PC-3 (cell line): ENCODE measurements at regions of chr2 and their contacts with region 1.

Region 1: GRCh38 chr2:138922973-138923563 is 142.9 kb upstream of the NXPH2 start:
- DNase-seq: peak; percentile 70
- ATAC-seq: peak; percentile 53
- H3K4me3 ChIP-seq: no peak overlapping the region
- H3K27ac ChIP-seq: no peak overlapping the region
- H3K4me1 ChIP-seq: peaks cover 11% of the 10 kb centered on the region; the same call in 1 of the 2 replicates
- H3K27me3 ChIP-seq: no peaks in the 10 kb centered on the region
- CTCF ChIP-seq: peak; percentile 84

Region 2: DNA sequence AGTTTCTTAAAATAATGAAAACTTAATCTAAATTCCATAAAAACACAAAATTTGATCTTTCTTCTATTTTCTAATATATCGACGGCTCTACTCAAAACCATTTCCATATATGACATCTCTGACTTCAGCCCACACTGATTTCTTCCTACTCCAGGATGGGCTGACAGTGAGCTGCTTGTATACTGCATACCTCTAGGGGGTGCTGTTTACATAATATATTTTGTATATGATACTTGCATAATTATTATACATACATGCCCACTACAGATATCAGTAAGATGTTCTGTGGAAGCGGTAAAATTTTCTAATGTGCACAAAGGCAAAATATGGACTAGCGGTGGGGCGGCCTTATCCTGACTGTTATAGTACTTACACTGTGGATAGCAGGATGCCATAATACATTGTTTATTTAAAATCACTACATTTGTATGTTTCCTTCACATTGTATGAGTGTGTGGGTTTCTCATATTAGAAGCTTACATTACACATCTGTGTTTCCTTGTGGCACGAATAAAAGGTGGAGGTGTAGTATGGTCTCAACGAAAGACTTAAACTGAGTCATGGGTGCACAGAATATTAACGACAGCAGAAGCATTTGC is 76.7 kb before region 1 on chr2:
- CTCF ChIA-PET with region 1: no interaction called
- POLR2A ChIA-PET with region 1: no interaction called
- intact Hi-C with region 1: loop called (anchors 2 kb)
- DNase-seq: peak; percentile 73
- ATAC-seq: peak; percentile 92
- H3K4me3 ChIP-seq: no peak overlapping the region
- H3K27ac ChIP-seq: no peak overlapping the region
- H3K4me1 ChIP-seq: no peaks in the 10 kb centered on the region
- H3K27me3 ChIP-seq: no peaks in the 10 kb centered on the region
- CTCF ChIP-seq: peak; percentile 93

Region 3: GRCh38 chr2:139031722-139032121 is 108.7 kb after region 1 on chr2:
- CTCF ChIA-PET with region 1: interaction called, 6 read pairs
- POLR2A ChIA-PET with region 1: no interaction called
- intact Hi-C with region 1: loop called (anchors 1 kb)
- DNase-seq: peak; percentile 78
- ATAC-seq: peak; percentile 86
- H3K4me3 ChIP-seq: no peak overlapping the region
- H3K27ac ChIP-seq: peak overlapping the region; percentile 52
- H3K4me1 ChIP-seq: peaks cover 26% of the 10 kb centered on the region
- H3K27me3 ChIP-seq: no peaks in the 10 kb centered on the region
- CTCF ChIP-seq: peak; percentile 57

Region 4: DNA sequence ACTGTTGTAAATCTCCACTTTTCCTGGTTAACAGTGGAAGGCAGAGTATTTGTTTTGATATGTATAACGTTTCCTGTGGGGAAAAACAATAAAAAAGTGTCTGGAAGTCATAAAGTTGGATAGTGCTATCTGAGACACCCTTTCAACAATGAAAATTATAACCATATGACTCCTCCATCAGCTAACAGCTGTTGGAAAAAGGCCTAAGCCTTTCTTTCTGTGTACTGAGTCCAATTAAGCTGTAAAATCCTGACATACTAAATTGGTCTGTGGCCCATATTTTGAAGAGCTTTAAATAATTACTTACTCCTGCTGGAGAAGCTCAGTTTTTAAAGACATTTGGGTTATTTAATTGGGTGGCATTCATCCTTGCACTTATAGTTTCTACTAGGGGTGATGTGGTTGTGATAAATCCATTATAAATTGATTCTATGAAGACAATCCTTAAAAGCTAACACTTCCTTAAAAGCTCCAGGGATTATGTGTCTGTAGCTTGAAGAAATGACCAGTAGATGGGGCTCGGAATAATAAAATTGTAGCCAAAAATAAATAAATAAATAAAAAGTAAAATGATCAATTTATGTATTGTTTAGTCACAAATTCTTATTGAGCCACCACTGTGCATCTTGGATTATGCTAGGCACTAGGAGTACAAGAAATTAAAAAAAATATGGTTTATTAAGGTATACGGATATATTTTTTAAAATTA is 555.3 kb after region 1 on chr2:
- CTCF ChIA-PET with region 1: no interaction called
- POLR2A ChIA-PET with region 1: no interaction called
- intact Hi-C with region 1: loop called (anchors 5 kb)
- DNase-seq: peak; percentile 37
- ATAC-seq: peak; percentile 50
- H3K4me3 ChIP-seq: no peak overlapping the region
- H3K27ac ChIP-seq: no peak overlapping the region
- H3K4me1 ChIP-seq: no peaks in the 10 kb centered on the region
- H3K27me3 ChIP-seq: no peaks in the 10 kb centered on the region
- CTCF ChIP-seq: peak; percentile 58

Region 5: GRCh38 chr2:140178234-140178633 is 1255.2 kb after region 1 on chr2:
- CTCF ChIA-PET with region 1: no interaction called
- POLR2A ChIA-PET with region 1: no interaction called
- intact Hi-C with region 1: loop called (anchors 10 kb)
- DNase-seq: peak; percentile 88
- ATAC-seq: peak; percentile 87
- H3K4me3 ChIP-seq: peak overlapping the region; percentile 16; the same call in 1 of the 2 replicates
- H3K27ac ChIP-seq: peak overlapping the region; percentile 27; the same call in 1 of the 2 replicates
- H3K4me1 ChIP-seq: peaks cover 17% of the 10 kb centered on the region
- H3K27me3 ChIP-seq: no peaks in the 10 kb centered on the region
- CTCF ChIP-seq: no peak